Tibial artery (tissue), 4 donors: ENCODE measurements at regions of chr4 and their contacts with region 1.

Region 1: DNA sequence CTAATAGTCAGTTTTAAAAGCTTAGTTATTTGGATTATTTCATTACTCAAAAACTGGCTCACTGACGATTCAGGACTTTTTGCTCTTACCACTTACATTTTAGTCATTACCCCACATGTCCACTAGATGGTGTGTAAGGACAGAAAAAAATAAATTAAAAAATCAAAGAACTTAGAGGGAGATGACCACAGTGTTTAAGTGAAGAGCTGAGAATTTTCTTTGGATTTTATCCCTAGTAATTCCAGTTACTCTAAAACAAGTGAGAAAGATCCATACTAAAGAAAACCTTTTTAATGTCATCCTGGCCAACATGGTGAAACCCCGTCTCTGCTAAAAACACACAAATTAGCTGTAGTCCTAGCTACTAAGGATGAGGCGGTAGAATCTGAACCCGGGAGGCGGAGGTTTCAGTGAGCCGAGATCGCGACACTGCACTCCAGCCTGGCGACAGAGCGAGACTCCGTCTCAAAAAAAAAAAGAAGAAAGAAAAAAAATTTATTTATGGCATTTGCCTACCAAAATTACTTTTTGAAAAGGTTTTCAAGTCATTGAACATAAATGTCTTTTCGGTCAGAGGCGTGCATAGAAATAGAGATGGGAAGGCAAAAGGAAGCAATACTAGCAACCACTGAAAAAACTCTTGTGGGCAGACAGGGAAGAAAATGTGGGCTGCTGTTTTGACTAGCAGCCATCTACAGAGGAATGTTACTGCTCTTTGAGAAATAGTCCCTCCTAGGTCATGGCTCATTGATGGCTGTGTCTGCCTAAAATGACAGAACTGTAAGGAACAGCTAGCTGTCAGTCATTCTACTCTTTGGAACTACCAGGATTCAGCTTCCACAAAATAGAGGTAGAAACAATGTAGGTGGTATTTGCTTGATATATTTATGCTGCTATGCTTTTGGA is 26.6 kb upstream of the TMPRSS11B start:
- DNase-seq: no peak
- H3K4me3 ChIP-seq: peak overlapping the region; percentile 14 to 41
- H3K27ac ChIP-seq: no peak overlapping the region
- H3K4me1 ChIP-seq: no peaks in the 10 kb centered on the region
- H3K27me3 ChIP-seq: no peaks in the 10 kb centered on the region
- CTCF ChIP-seq: peak; percentile 77 to 80

Region 2: DNA sequence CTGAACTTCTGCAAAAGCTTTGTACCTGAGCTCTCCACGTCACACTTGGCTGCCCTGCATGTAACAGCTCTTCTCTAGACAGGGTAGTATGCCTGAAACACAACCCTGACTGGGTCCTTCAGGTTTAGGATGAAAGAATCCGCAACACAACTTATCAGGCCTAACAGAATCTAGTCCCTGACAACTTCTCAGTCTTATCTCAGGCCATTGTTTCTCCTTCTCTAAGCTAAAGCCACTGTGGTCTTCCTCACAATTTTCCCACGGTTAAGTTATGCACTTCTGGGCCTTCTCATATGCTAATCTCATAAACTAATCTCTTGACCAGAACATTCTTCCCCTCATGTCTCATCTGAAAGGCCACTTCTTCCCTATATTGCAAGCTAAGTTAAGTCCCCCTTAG is 15.8 kb before region 1 on chr4:
- intact Hi-C with region 1: no loop called
- DNase-seq: no peak
- H3K4me3 ChIP-seq: no peak overlapping the region
- H3K27ac ChIP-seq: no peak overlapping the region
- H3K4me1 ChIP-seq: no peaks in the 10 kb centered on the region
- H3K27me3 ChIP-seq: no peaks in the 10 kb centered on the region
- CTCF ChIP-seq: no peak

Region 3: GRCh38 chr4:68365068-68365467 is 93.0 kb after region 1 on chr4:
- intact Hi-C with region 1: no loop called
- DNase-seq: no peak
- H3K4me3 ChIP-seq: no peak overlapping the region
- H3K27ac ChIP-seq: no peak overlapping the region
- H3K4me1 ChIP-seq: peaks cover 0 to 14% (median 6%) of the 10 kb centered on the region in 4 donors
- H3K27me3 ChIP-seq: no peaks in the 10 kb centered on the region
- CTCF ChIP-seq: no peak

Region 4: GRCh38 chr4:68375667-68376559 is 103.8 kb after region 1 on chr4:
- intact Hi-C with region 1: loop called (anchors 2 kb)
- DNase-seq: no peak
- H3K4me3 ChIP-seq: no peak overlapping the region
- H3K27ac ChIP-seq: no peak overlapping the region
- H3K4me1 ChIP-seq: peaks cover 0 to 8% (median 2%) of the 10 kb centered on the region in 4 donors
- H3K27me3 ChIP-seq: peaks cover 0 to 5% of the 10 kb centered on the region in 2 donors
- CTCF ChIP-seq: peak; percentile 80 to 89

Region 5: GRCh38 chr4:68518889-68519288 is 246.8 kb after region 1 on chr4:
- intact Hi-C with region 1: no loop called
- DNase-seq: no peak
- H3K4me3 ChIP-seq: no peak overlapping the region
- H3K27ac ChIP-seq: no peak overlapping the region
- H3K4me1 ChIP-seq: no peaks in the 10 kb centered on the region
- H3K27me3 ChIP-seq: no peaks in the 10 kb centered on the region
- CTCF ChIP-seq: no peak